CD8-positive, alpha-beta memory T cell (primary cell): ENCODE measurements at regions of chr2 and their contacts with region 1.

Region 1: DNA sequence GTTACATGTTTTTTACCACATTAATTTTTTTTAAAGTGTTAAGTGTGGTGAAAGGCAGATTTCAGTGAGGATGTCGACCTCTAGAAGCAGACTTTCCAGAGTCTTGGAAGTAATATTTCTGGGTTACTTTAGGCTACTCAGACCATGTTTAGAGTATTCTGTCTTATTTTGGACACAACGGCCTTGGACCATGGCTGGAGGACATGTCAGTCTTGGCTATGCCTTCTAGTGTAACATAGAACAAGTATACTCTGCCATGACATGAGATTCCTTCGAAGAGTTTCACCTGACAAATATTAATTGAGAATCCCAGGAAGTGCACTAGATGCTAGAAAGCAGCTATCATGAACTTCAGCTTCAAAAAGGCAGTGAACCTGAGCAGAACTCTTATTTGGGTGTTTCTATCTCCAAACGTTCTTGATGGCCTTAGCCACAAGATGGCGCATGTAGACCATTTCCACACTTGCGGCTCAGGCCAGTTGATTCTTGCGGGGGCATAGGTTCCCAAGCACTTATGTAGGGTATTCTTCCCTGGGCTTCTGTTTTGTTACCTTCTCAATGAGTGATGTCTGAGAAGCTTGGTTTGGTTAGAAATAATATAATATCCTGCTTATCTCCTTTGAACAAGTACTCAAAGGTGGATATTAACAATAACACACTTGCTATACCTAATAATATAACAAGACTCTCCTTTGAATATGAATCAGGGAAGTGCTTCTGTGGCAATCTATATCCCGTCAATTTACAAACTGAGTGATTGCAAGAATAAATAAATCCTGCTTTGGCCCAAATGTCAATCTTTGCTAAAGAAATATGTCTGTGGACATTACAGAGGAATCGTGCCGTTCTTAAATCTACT is 62.0 kb downstream of the CACNB4 start:
- DNase-seq: peak in 4 of 5 donors; percentile 15 to 37 (median 24)
- H3K4me3 ChIP-seq: no peak overlapping the region
- H3K4me3 Mint-ChIP-seq: no peak overlapping the region
- H3K27ac ChIP-seq: no peak overlapping the region
- H3K27ac Mint-ChIP-seq: no peak overlapping the region
- H3K4me1 ChIP-seq: no peaks in the 10 kb centered on the region
- H3K4me1 Mint-ChIP-seq: no peaks in the 10 kb centered on the region
- H3K27me3 ChIP-seq: no peaks in the 10 kb centered on the region
- H3K27me3 Mint-ChIP-seq: peaks cover 2 to 5% of the 10 kb centered on the region in 2 donors

Region 2: GRCh38 chr2:151878655-151879563 is 157.9 kb before region 1 on chr2:
- CTCF ChIA-PET with region 1: no interaction called
- POLR2A ChIA-PET with region 1: no interaction called
- DNase-seq: no peak
- H3K4me3 ChIP-seq: no peak overlapping the region
- H3K4me3 Mint-ChIP-seq: no peak overlapping the region
- H3K27ac ChIP-seq: no peak overlapping the region
- H3K27ac Mint-ChIP-seq: no peak overlapping the region
- H3K4me1 ChIP-seq: no peaks in the 10 kb centered on the region
- H3K4me1 Mint-ChIP-seq: peaks cover 0 to 9% (median 0%) of the 10 kb centered on the region in 3 donors
- H3K27me3 ChIP-seq: no peaks in the 10 kb centered on the region
- H3K27me3 Mint-ChIP-seq: peaks cover 1% of the 10 kb centered on the region in 2 donors

Region 3: DNA sequence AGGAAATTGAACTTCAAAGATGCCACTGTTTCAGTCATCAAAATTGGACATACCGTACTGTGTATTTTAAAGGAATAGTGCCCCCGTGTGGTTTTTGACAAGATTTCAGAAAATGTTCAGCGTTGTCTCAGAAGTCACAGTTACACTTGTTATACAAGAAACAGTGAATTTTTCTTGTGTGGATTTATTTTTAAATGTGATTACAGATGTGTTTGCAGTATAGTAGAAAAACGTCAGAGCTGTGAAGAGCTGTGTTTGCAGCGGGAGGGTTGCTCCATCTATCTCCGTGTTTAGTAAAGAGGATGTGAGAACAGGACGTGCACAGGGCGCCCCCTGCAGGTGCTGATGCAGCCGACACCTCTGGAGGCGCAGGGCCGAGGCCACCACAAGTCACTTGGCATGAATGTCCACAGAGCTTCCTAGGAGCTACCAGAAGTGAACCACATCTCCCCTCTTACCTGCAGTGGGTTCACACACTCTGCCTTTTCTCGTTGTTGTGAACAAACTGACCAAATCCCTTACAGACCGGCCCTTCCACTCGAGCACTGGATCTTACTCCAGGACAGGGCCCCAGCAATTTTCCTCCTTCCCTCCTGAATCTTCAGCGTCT is 11.1 kb before region 1 on chr2:
- CTCF ChIA-PET with region 1: interaction called, 15 read pairs
- POLR2A ChIA-PET with region 1: no interaction called
- DNase-seq: peak; percentile 61 to 77 (median 70)
- H3K4me3 ChIP-seq: peak overlapping the region; percentile 69
- H3K4me3 Mint-ChIP-seq: peak overlapping the region; percentile 31 to 84 (median 82)
- H3K27ac ChIP-seq: no peak overlapping the region
- H3K27ac Mint-ChIP-seq: peak overlapping the region in 3 of 8 donors; percentile 20 to 72 (median 23)
- H3K4me1 ChIP-seq: no peaks in the 10 kb centered on the region
- H3K4me1 Mint-ChIP-seq: peaks cover 6 to 9% (median 9%) of the 10 kb centered on the region in 3 donors
- H3K27me3 ChIP-seq: no peaks in the 10 kb centered on the region
- H3K27me3 Mint-ChIP-seq: peaks cover 4 to 9% of the 10 kb centered on the region in 2 donors

Region 4: GRCh38 chr2:152047819-152048471 is 11.1 kb after region 1 on chr2:
- CTCF ChIA-PET with region 1: interaction called, 14 read pairs
- POLR2A ChIA-PET with region 1: no interaction called
- DNase-seq: no peak
- H3K4me3 ChIP-seq: no peak overlapping the region
- H3K4me3 Mint-ChIP-seq: no peak overlapping the region
- H3K27ac ChIP-seq: no peak overlapping the region
- H3K27ac Mint-ChIP-seq: no peak overlapping the region
- H3K4me1 ChIP-seq: no peaks in the 10 kb centered on the region
- H3K4me1 Mint-ChIP-seq: no peaks in the 10 kb centered on the region
- H3K27me3 ChIP-seq: no peaks in the 10 kb centered on the region
- H3K27me3 Mint-ChIP-seq: peaks cover 3 to 4% of the 10 kb centered on the region in 2 donors